ENCODE measurements at regions of chr16 and their contacts with region 1.

Region 1: DNA sequence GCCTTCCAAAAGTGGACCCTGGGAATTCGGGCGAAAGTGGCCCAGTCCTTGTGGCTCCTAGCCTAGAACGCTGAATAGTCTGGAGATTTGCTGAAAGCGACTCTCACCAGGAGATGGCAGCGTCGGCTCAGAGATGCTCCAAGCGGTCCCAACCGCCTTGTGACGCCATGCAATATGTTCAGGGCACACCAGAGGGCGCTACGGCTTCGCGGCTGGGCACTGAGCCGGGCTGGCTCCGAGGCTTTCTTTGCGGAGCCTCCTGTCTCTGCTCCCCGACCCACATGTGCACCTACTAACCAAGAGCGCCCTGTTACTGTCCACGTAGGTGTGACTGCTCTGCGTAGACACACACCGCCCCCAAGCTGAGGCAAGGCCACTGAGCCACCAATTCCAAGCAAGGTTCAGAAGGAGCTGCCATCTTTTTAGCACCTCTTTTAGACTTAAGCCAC is 36.9 kb downstream of the SYCE1L start:
- DNase-seq: no peak
- ATAC-seq: peak; percentile 98
- H3K4me3 ChIP-seq: peak overlapping the region in 1 of 2 experiments; percentile 14; a peak in 1 of 4 replicates
- H3K27ac ChIP-seq: no peak overlapping the region
- H3K4me1 ChIP-seq: peaks cover 0 to 5% of the 10 kb centered on the region in 2 experiments; a peak in 2 of 4 replicates
- H3K27me3 ChIP-seq: no peaks in the 10 kb centered on the region
- CTCF ChIP-seq: peak; percentile 98 to 99 (median 99)
- POLR2A ChIP-seq: no peak
- RAD21 ChIP-seq: peak; percentile 100

Region 2: GRCh38 chr16:77157346-77158058 is 78.6 kb before region 1 on chr16:
- CTCF ChIA-PET with region 1: no interaction called
- POLR2A ChIA-PET with region 1: no interaction called
- RAD21 ChIA-PET with region 1: no interaction called
- intact Hi-C with region 1: no loop called
- DNase-seq: no peak
- ATAC-seq: no peak
- H3K4me3 ChIP-seq: no peak overlapping the region
- H3K27ac ChIP-seq: no peak overlapping the region
- H3K4me1 ChIP-seq: no peaks in the 10 kb centered on the region
- H3K27me3 ChIP-seq: peaks cover 37% of the 10 kb centered on the region
- CTCF ChIP-seq: no peak
- POLR2A ChIP-seq: no peak
- RAD21 ChIP-seq: no peak

Region 3: GRCh38 chr16:77376358-77376757 is 140.3 kb after region 1 on chr16:
- CTCF ChIA-PET with region 1: no interaction called
- POLR2A ChIA-PET with region 1: no interaction called
- RAD21 ChIA-PET with region 1: no interaction called
- intact Hi-C with region 1: loop called (anchors 1 kb)
- DNase-seq: no peak
- ATAC-seq: peak; percentile 59; the same call in 1 of the 2 replicates
- H3K4me3 ChIP-seq: no peak overlapping the region
- H3K27ac ChIP-seq: no peak overlapping the region
- H3K4me1 ChIP-seq: no peaks in the 10 kb centered on the region
- H3K27me3 ChIP-seq: peaks cover 4% of the 10 kb centered on the region
- CTCF ChIP-seq: peak; percentile 26 to 67 (median 64); a peak in 5 of 6 replicates
- POLR2A ChIP-seq: no peak
- RAD21 ChIP-seq: no peak

Region 4: GRCh38 chr16:77584205-77584859 is 348.2 kb after region 1 on chr16:
- CTCF ChIA-PET with region 1: interaction called, 77 read pairs
- POLR2A ChIA-PET with region 1: no interaction called
- RAD21 ChIA-PET with region 1: no interaction called
- intact Hi-C with region 1: loop called (anchors 1 kb)
- DNase-seq: peak; percentile 46
- ATAC-seq: peak; percentile 80
- H3K4me3 ChIP-seq: no peak overlapping the region
- H3K27ac ChIP-seq: no peak overlapping the region
- H3K4me1 ChIP-seq: peaks cover 9 to 18% of the 10 kb centered on the region in 2 experiments
- H3K27me3 ChIP-seq: peaks cover 26% of the 10 kb centered on the region
- CTCF ChIP-seq: peak; percentile 66 to 96 (median 81)
- POLR2A ChIP-seq: no peak
- RAD21 ChIP-seq: peak; percentile 88

Region 5: GRCh38 chr16:77675464-77676324 is 439.6 kb after region 1 on chr16:
- CTCF ChIA-PET with region 1: no interaction called
- POLR2A ChIA-PET with region 1: no interaction called
- RAD21 ChIA-PET with region 1: no interaction called
- intact Hi-C with region 1: loop called (anchors 5 kb)
- DNase-seq: peak; percentile 63
- ATAC-seq: peak; percentile 90
- H3K4me3 ChIP-seq: no peak overlapping the region
- H3K27ac ChIP-seq: no peak overlapping the region
- H3K4me1 ChIP-seq: no peaks in the 10 kb centered on the region
- H3K27me3 ChIP-seq: peaks cover 6% of the 10 kb centered on the region; the same call in 1 of the 2 replicates
- CTCF ChIP-seq: peak; percentile 80 to 93 (median 84); a peak in 5 of 6 replicates
- POLR2A ChIP-seq: no peak
- RAD21 ChIP-seq: peak; percentile 93

Region 6: GRCh38 chr16:78099372-78100161 is 863.5 kb after region 1 on chr16 and contains the start of gene WWOX:
- CTCF ChIA-PET with region 1: interaction called, 3 read pairs
- POLR2A ChIA-PET with region 1: no interaction called
- RAD21 ChIA-PET with region 1: no interaction called
- intact Hi-C with region 1: loop called (anchors 5 kb)
- DNase-seq: peak; percentile 93
- ATAC-seq: peak; percentile 91
- H3K4me3 ChIP-seq: peak within 1 kb of the TSS; percentile 75 to 85
- H3K27ac ChIP-seq: peak within 1 kb of the TSS; percentile 79
- H3K4me1 ChIP-seq: peaks cover 5 to 15% of the 10 kb centered on the region in 2 experiments; a peak in 2 of 4 replicates
- H3K27me3 ChIP-seq: no peaks in the 10 kb centered on the region
- CTCF ChIP-seq: peak; percentile 56 to 91 (median 88); a peak in 5 of 6 replicates
- POLR2A ChIP-seq: no peak
- RAD21 ChIP-seq: peak; percentile 49
- total RNA-seq, gene WWOX: 13.7 TPM

Measured in HCT116 (cell line).